ENCODE measurements at regions of chr4 and their contacts with region 1.

Region 1: DNA sequence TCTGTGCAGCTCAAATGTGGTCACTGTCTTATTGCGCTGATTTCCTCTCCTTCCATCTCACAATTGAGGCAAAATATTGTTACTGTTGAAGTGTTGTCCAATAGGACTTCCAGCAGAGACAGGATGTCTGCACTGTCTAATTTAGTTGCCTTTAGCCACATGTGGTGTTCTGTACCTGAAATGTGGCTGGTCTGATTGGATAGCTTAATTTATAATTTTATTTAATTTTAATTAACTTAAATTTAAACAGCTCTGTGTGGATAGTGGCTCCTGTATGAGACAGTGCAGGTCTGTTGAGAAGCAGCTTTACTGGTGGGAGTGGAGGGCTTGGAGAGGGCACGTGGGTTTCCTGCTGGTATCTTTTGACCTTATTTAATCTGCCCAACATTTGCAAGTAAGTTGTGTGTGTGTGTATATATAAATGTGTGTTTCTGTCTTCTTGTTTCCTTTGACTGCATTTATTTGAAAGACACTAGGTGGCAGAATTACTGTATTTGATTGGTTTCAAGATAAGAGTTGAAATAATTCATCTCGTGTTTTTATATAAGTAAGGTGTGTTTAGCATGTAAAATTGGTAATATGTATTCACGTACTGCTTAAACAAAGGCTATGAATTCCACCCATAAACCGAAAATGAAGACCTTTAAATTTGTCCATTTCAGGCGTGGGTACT is 55.3 kb upstream of the MSANTD1 start:
- DNase-seq: peak in 1 of 2 donors; percentile 59
- ATAC-seq: no peak
- H3K4me3 ChIP-seq: no peak overlapping the region
- H3K4me3 Mint-ChIP-seq: peak overlapping the region; percentile 64
- H3K27ac ChIP-seq: peak overlapping the region; percentile 87
- H3K27ac Mint-ChIP-seq: peak overlapping the region; percentile 79 to 96
- H3K4me1 ChIP-seq: peaks cover 78% of the 10 kb centered on the region
- H3K4me1 Mint-ChIP-seq: peaks cover 87 to 94% of the 10 kb centered on the region in 2 donors
- H3K27me3 ChIP-seq: no peaks in the 10 kb centered on the region
- H3K27me3 Mint-ChIP-seq: no peaks in the 10 kb centered on the region
- CTCF ChIP-seq: peak; percentile 42

Region 2: GRCh38 chr4:3174371-3175338 is 19.0 kb before region 1 on chr4:
- intact Hi-C with region 1: loop called (anchors 2 kb)
- DNase-seq: peak in 1 of 2 donors; percentile 24
- ATAC-seq: peak; percentile 91 to 98 (median 95)
- H3K4me3 ChIP-seq: no peak overlapping the region
- H3K4me3 Mint-ChIP-seq: peak overlapping the region; percentile 78
- H3K27ac ChIP-seq: peak overlapping the region; percentile 44
- H3K27ac Mint-ChIP-seq: peak overlapping the region; percentile 84 to 90
- H3K4me1 ChIP-seq: peaks cover 22% of the 10 kb centered on the region
- H3K4me1 Mint-ChIP-seq: peaks cover 49 to 52% of the 10 kb centered on the region in 2 donors
- H3K27me3 ChIP-seq: no peaks in the 10 kb centered on the region
- H3K27me3 Mint-ChIP-seq: no peaks in the 10 kb centered on the region
- CTCF ChIP-seq: no peak

Region 3: DNA sequence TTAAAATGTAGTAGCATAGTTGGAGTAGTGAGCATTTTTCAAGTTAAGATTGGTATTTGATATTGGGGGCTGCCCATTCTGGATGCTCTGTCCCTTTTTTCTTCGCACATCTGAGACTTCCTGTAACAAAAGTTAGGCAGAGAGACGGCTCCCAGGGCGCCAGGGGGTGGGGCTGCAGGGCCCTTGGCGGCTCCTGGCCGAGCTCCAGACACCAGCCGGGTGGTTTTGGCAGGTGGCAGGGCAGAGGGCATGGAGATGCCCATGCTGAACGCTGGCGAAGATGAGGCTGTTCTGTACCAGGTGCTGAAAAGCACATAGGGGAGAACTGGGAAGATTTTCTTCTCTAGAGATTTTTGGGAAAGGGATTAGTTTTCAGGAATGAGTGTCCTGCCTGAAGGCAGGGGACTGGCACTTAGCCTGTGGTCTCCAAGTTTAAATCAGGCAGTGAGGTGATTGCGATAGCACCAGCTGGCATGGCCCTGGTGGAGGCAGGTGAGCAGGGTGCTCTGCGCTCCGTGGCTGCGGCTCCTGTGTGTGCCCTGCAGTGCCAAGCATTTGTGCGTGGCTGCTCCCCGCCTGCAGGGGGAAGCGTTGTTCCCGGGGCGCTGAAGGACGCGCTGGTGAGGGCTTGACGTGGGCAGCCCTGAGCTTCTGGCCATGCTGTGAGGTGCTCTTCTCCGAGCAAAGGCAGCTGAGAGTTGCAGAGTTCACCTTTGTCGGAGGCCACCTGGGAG is 224.5 kb after region 1 on chr4:
- intact Hi-C with region 1: no loop called
- DNase-seq: no peak
- ATAC-seq: no peak
- H3K4me3 ChIP-seq: no peak overlapping the region
- H3K4me3 Mint-ChIP-seq: no peak overlapping the region
- H3K27ac ChIP-seq: no peak overlapping the region
- H3K27ac Mint-ChIP-seq: no peak overlapping the region
- H3K4me1 ChIP-seq: no peaks in the 10 kb centered on the region
- H3K4me1 Mint-ChIP-seq: no peaks in the 10 kb centered on the region
- H3K27me3 ChIP-seq: no peaks in the 10 kb centered on the region
- H3K27me3 Mint-ChIP-seq: no peaks in the 10 kb centered on the region
- CTCF ChIP-seq: no peak

Region 4: GRCh38 chr4:3442959-3443749 is 249.5 kb after region 1 on chr4:
- intact Hi-C with region 1: loop called (anchors 2 kb)
- DNase-seq: peak; percentile 77 to 80
- ATAC-seq: peak; percentile 66 to 95 (median 87)
- H3K4me3 ChIP-seq: no peak overlapping the region
- H3K4me3 Mint-ChIP-seq: no peak overlapping the region
- H3K27ac ChIP-seq: no peak overlapping the region
- H3K27ac Mint-ChIP-seq: no peak overlapping the region
- H3K4me1 ChIP-seq: peaks cover 12% of the 10 kb centered on the region
- H3K4me1 Mint-ChIP-seq: no peaks in the 10 kb centered on the region
- H3K27me3 ChIP-seq: no peaks in the 10 kb centered on the region
- H3K27me3 Mint-ChIP-seq: no peaks in the 10 kb centered on the region
- CTCF ChIP-seq: peak; percentile 99

Measured in natural killer cell (primary cell).